ENCODE measurements at regions of chr1 and their contacts with region 1.

Region 1: DNA sequence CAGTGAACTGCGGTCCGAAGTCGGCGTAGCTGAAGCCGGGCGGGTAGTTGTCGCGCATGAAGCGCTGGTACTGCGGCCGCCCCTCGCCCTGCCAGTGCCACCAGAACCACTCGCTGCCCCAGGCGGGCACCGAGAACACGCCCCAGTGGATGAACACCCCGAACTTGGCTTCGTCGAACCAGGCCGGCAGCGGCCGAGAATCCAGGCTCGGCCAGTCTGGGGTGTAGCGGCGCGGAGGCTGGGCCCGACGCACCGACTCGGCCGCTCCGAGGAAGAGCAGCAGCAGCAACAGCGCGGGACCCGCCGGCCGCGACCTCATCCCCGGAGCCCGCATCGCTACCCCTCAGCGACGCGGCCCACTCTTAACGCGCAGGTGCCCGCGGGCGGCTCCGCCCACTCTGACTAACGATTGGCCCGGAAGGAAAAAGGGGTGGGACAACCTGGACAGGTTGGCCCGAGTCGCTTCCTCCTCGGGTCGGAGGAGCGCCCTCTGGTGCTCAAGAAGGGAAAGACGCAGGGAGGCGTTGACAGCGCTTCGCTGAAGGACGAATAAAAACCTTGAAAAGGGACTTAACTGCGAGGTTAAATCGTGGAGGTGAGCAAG is at the start of gene FUCA1:
- DNase-seq: peak; percentile 92
- H3K4me3 Mint-ChIP-seq: peak within 1 kb of the TSS; percentile 81
- H3K27ac Mint-ChIP-seq: no peak within 1 kb of the TSS
- H3K4me1 Mint-ChIP-seq: peaks cover 18% of the 10 kb centered on the region
- H3K27me3 Mint-ChIP-seq: peaks cover 11% of the 10 kb centered on the region
- total RNA-seq, gene FUCA1: 3.5 TPM in 2 replicates

Region 2: GRCh38 chr1:23530747-23531561 is 337.1 kb before region 1 on chr1 and contains the start of gene E2F2:
- intact Hi-C with region 1: no loop called
- DNase-seq: peak; percentile 76
- H3K4me3 Mint-ChIP-seq: peak within 1 kb of the TSS; percentile 96
- H3K27ac Mint-ChIP-seq: peak within 1 kb of the TSS; percentile 97
- H3K4me1 Mint-ChIP-seq: peaks cover 84% of the 10 kb centered on the region
- H3K27me3 Mint-ChIP-seq: no peaks in the 10 kb centered on the region
- total RNA-seq, gene E2F2: 32.0 and 33.5 TPM in 2 replicates

Region 3: GRCh38 chr1:23585447-23586015 is 282.5 kb before region 1 on chr1:
- intact Hi-C with region 1: no loop called
- DNase-seq: no peak
- H3K4me3 Mint-ChIP-seq: no peak overlapping the region
- H3K27ac Mint-ChIP-seq: no peak overlapping the region
- H3K4me1 Mint-ChIP-seq: peaks cover 12% of the 10 kb centered on the region
- H3K27me3 Mint-ChIP-seq: peaks cover 3% of the 10 kb centered on the region

Region 4: DNA sequence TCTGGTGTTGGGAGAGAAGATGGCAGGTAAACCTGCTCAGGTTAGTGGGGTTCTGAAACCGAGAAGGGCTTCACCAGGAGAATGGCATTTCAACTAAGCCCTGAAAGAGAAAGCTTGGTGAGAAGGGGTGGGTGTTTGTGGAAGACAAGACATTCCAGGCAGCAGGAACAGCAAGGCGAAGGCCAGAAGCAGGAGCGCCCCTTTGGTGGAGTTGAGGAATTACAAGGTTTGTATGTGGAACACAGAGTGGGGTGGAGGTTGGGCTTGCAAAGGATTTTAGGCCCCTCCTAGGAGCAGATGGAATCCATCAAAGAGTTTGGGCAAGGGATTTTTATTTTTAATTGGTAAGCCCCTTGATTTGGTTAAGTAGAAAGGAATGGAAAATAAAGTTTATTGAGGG is 149.6 kb before region 1 on chr1:
- intact Hi-C with region 1: no loop called
- DNase-seq: no peak
- H3K4me3 Mint-ChIP-seq: no peak overlapping the region
- H3K27ac Mint-ChIP-seq: no peak overlapping the region
- H3K4me1 Mint-ChIP-seq: peaks cover 32% of the 10 kb centered on the region
- H3K27me3 Mint-ChIP-seq: no peaks in the 10 kb centered on the region

Region 5: GRCh38 chr1:23777979-23778814 is 89.9 kb before region 1 on chr1 and contains the start of gene PITHD1:
- intact Hi-C with region 1: loop called (anchors 1 kb)
- DNase-seq: peak; percentile 80
- H3K4me3 Mint-ChIP-seq: peak within 1 kb of the TSS; percentile 95
- H3K27ac Mint-ChIP-seq: peak within 1 kb of the TSS; percentile 94
- H3K4me1 Mint-ChIP-seq: peaks cover 43% of the 10 kb centered on the region
- H3K27me3 Mint-ChIP-seq: no peaks in the 10 kb centered on the region
- total RNA-seq, gene PITHD1: 83.2 and 83.4 TPM in 2 replicates

Region 6: DNA sequence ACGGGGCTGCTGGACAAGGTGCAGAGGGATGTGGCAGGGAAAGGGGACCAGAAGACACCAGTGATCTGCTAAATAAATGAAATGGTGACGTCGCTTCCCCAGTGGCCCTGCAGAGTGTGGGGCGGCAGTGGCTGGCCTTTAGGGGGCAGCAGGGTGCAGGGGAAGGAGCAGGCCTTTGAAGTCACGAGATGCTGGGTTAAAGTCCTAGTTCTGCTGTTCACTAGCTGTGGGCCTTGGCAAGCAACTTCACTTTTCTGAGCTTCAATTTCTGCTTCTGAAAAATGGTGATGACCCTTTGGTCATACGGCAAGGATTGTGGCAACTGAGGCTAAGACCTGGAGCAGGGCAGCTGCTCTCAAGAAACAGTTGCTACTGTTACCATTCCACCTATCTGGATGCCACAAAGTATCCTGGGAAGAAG is 58.3 kb before region 1 on chr1:
- intact Hi-C with region 1: loop called (anchors 1 kb)
- DNase-seq: peak; percentile 70
- H3K4me3 Mint-ChIP-seq: no peak overlapping the region
- H3K27ac Mint-ChIP-seq: no peak overlapping the region
- H3K4me1 Mint-ChIP-seq: peaks cover 19% of the 10 kb centered on the region
- H3K27me3 Mint-ChIP-seq: no peaks in the 10 kb centered on the region

Region 7: DNA sequence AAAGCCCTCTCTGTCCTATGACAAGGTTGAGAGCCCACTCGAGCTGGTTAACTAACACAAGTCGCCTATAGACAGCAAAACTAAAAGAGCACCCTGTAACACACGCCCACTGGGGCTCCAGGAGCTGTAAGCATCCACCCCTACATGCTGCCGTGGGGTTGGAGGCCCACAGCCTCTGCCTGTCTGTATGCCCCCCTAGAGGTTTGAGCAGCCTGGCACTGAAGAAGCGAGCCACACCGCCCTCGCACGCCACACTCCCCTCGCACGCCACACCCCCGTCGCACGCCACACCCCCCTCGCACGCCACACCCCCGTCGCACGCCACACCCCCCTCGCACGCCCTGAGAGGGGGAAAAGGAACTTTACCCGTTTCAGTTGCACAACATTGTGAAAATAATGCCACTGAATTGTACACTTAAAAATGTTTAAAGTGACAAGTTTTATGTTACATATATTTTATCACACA is 29.6 kb before region 1 on chr1:
- intact Hi-C with region 1: loop called (anchors 1 kb)
- DNase-seq: peak; percentile 53
- H3K4me3 Mint-ChIP-seq: peak overlapping the region; percentile 75
- H3K27ac Mint-ChIP-seq: no peak overlapping the region
- H3K4me1 Mint-ChIP-seq: peaks cover 14% of the 10 kb centered on the region
- H3K27me3 Mint-ChIP-seq: peaks cover 10% of the 10 kb centered on the region

Region 8: GRCh38 chr1:23878668-23879067 is 10.6 kb after region 1 on chr1:
- intact Hi-C with region 1: no loop called
- DNase-seq: no peak
- H3K4me3 Mint-ChIP-seq: no peak overlapping the region
- H3K27ac Mint-ChIP-seq: no peak overlapping the region
- H3K4me1 Mint-ChIP-seq: no peaks in the 10 kb centered on the region
- H3K27me3 Mint-ChIP-seq: peaks cover 2% of the 10 kb centered on the region